Activated CD4-positive, alpha-beta memory T cell treated with anti-CD3 and anti-CD28 coated beads for 36 hours (primary cell): ENCODE measurements at regions of chr7 and their contacts with region 1.

Region 1: DNA sequence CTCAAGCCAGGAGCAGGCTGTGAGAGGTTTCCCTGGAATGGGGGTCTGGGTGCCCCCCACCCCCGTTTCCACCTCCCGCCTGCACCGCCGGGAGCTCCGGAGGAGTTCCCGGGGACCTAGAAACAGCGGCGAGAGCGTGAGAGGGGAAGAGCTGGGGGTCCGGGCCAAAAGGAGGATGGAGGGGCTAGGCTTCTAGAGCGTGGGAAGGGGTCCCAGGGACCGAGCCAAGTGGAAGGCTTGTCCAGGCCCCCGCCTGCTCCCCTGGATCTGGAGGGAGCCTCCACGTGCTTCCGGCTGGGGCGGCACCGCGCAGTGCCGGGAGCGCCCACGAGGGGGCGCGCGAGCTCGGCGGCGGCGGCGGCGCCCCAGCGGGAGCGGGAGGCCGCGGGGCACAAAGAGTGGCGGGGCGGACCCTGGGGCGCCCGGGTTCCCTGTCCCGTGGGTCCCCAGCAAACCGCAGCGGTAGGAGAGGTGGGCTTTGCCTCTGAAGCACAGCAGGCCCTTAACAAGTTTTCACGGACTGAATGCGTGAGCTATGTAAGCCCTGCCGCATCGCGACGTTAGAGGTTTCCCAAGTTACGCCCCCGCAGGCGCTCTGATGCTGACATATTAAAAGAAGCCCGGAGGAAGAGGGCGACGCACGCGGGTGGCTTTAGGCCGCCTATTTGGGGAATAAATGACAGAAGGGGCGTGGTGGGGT is 104.4 kb upstream of the LRRC4 start:
- DNase-seq: peak; percentile 75
- H3K4me3 Mint-ChIP-seq: peak overlapping the region; percentile 62
- H3K27ac Mint-ChIP-seq: no peak overlapping the region
- H3K4me1 Mint-ChIP-seq: peaks cover 12% of the 10 kb centered on the region
- H3K27me3 Mint-ChIP-seq: peaks cover 31% of the 10 kb centered on the region

Region 2: DNA sequence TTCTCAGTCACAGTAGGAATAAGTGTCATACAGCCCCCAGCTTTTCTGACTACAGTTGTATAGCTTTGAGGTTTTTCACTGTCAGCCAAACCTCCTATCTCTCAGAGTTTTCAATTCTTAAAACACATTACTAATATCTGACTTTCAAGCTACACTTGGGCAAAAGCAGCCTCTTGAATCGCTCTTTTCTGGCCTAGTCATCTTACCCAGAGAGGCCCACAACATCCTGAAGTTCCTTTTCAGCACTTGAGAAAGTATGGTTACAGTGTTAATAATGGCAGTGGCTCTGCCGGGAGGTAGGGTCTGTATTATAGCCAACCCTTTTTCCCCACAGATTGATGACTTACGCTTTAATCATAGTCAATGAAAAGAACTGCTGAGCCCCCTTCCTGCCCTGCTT is 285.5 kb before region 1 on chr7:
- CTCF ChIA-PET with region 1: no interaction called
- POLR2A ChIA-PET with region 1: no interaction called
- intact Hi-C with region 1: no loop called
- DNase-seq: peak; percentile 61
- H3K4me3 Mint-ChIP-seq: no peak overlapping the region
- H3K27ac Mint-ChIP-seq: peak overlapping the region; percentile 79
- H3K4me1 Mint-ChIP-seq: peaks cover 45% of the 10 kb centered on the region
- H3K27me3 Mint-ChIP-seq: no peaks in the 10 kb centered on the region

Region 3: DNA sequence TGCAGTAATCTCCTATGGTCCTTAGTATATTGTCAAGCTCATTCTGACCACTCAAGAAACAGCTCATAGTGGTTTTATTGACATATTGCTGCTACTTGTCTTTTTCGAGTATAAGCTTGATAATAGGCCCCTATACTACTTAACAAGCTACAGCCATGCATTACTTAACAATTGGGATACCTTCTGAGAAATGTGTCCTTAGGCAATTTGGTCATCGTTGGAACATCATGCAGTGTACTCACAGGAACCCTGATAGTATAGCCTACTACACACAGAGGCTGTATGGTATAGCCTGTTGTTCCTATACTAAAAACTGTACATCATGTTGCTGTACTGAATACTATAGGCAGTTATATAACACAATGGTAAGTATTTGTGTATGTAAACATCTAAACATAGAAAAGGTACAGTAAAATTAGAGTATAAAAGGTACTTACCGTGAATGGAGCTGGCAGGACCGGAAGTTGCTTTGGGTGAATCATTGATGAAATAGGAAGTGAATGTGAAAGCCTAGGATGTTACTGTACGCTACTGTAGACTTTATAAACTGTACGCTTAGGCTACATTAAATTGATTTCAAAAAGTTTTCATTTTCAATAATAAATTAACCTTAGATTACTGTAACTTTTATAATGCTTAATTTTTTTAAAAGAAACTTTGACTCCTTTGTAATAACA is 265.3 kb before region 1 on chr7:
- CTCF ChIA-PET with region 1: no interaction called
- POLR2A ChIA-PET with region 1: no interaction called
- intact Hi-C with region 1: no loop called
- DNase-seq: no peak
- H3K4me3 Mint-ChIP-seq: no peak overlapping the region
- H3K27ac Mint-ChIP-seq: no peak overlapping the region
- H3K4me1 Mint-ChIP-seq: peaks cover 27% of the 10 kb centered on the region
- H3K27me3 Mint-ChIP-seq: no peaks in the 10 kb centered on the region

Region 4: DNA sequence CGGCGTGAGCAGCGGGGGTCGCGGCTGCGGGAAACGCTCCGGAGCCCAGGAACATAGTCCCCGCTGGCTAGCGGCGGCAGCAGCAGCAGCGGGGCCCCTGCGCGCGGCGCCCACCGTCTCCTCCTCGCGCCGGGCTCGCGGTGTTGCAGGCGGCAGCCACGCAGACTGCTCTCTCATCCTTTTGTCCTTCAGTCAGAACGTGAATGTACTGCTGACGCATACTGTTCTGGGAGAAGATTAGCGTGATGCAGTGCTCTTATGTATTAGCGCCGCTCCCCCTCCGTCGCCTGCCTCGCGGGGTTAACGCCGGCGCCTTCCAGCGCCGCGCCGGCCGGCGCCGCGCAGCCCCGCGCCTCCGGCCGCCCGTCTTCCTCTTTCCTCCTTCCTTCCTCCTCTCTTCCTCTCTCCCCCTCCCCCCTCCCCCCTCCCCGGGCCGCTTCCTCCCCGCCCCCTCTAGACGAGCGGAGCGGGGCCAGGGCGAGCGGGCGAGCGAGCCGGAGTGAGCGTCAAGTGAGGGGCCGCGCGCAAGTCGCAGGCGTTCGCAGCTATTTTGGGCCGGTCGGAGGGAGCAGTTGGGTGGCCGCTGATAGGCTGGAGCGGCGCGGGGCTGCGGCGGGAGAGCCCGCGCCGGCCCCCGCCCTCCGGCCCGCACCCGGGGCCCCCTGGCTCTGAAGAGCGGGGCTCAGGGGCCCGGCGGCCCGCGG is 103.6 kb before region 1 on chr7:
- CTCF ChIA-PET with region 1: interaction called, 6 read pairs
- POLR2A ChIA-PET with region 1: no interaction called
- intact Hi-C with region 1: loop called (anchors 1 kb)
- DNase-seq: peak; percentile 76
- H3K4me3 Mint-ChIP-seq: peak overlapping the region; percentile 72
- H3K27ac Mint-ChIP-seq: no peak overlapping the region
- H3K4me1 Mint-ChIP-seq: peaks cover 17% of the 10 kb centered on the region
- H3K27me3 Mint-ChIP-seq: no peaks in the 10 kb centered on the region

Region 5: GRCh38 chr7:128124786-128125185 is 10.9 kb before region 1 on chr7:
- CTCF ChIA-PET with region 1: interaction called, 10 read pairs
- POLR2A ChIA-PET with region 1: no interaction called
- intact Hi-C with region 1: no loop called
- DNase-seq: no peak
- H3K4me3 Mint-ChIP-seq: no peak overlapping the region
- H3K27ac Mint-ChIP-seq: no peak overlapping the region
- H3K4me1 Mint-ChIP-seq: peaks cover 6% of the 10 kb centered on the region
- H3K27me3 Mint-ChIP-seq: no peaks in the 10 kb centered on the region

Region 6: DNA sequence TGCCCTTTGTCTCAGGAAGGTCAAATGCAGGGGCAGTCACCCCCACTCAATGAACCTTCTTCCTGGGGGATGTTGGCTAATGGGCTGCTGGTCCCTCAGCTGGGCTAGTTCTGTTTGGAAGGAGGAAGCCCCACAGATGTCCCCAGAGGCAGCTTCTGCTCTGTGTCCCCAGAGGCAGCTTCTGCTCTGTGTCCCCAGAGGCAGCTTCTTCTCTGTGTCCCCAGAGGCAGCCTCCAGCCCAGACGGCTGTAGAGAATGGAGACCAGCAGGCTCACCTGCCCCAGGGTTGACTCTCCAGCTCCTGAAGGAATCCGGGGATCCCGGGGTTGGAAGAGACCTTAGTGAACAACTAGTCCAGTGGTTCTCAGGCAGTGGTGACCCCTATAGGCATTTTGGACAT is 42.9 kb after region 1 on chr7:
- CTCF ChIA-PET with region 1: interaction called, 12 read pairs
- POLR2A ChIA-PET with region 1: no interaction called
- intact Hi-C with region 1: no loop called
- DNase-seq: no peak
- H3K4me3 Mint-ChIP-seq: no peak overlapping the region
- H3K27ac Mint-ChIP-seq: no peak overlapping the region
- H3K4me1 Mint-ChIP-seq: no peaks in the 10 kb centered on the region
- H3K27me3 Mint-ChIP-seq: peaks cover 22% of the 10 kb centered on the region